PC-9 (cell line): ENCODE measurements at regions of chr18 and their contacts with region 1.

Region 1: DNA sequence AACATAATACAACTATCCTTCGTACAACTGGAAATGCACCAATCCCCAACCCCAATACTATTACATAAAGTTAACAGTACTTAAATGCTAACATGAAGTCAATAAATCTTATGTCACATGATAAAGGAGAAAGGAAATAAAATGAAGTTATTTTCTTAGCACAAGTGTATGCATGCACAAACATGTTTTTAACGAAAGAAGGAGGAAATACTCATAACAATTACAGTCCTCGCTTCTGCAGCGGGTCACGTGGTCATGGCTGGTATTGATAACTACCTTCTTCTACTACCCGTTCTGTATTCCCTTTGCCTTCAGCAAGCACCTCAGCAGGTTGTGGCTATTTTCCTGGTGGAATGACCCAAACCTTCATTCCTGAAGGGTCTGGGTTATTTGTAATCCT is 51.7 kb downstream of the PSMG2 start:
- DNase-seq: no peak
- H3K4me3 ChIP-seq: no peak overlapping the region
- H3K27ac ChIP-seq: no peak overlapping the region
- H3K4me1 ChIP-seq: no peaks in the 10 kb centered on the region
- H3K27me3 ChIP-seq: no peaks in the 10 kb centered on the region
- CTCF ChIP-seq: no peak

Region 2: GRCh38 chr18:12791610-12792009 is 37.1 kb after region 1 on chr18:
- CTCF ChIA-PET with region 1: no interaction called
- POLR2A ChIA-PET with region 1: interaction called, 15 read pairs
- intact Hi-C with region 1: no loop called
- DNase-seq: no peak
- H3K4me3 ChIP-seq: no peak overlapping the region
- H3K27ac ChIP-seq: no peak overlapping the region
- H3K4me1 ChIP-seq: no peaks in the 10 kb centered on the region
- H3K27me3 ChIP-seq: no peaks in the 10 kb centered on the region
- CTCF ChIP-seq: no peak